ENCODE measurements at regions of chr1 and their contacts with region 1.

Region 1: GRCh38 chr1:212035123-212035834 is at the starts of genes DTL and INTS7:
- DNase-seq: peak; percentile 99
- ATAC-seq: peak; percentile 83
- H3K4me3 Mint-ChIP-seq: peak within 1 kb of the TSS; percentile 85
- H3K27ac Mint-ChIP-seq: peak within 1 kb of the TSS; percentile 100
- H3K4me1 Mint-ChIP-seq: peaks cover 56% of the 10 kb centered on the region
- H3K27me3 Mint-ChIP-seq: no peaks in the 10 kb centered on the region
- total RNA-seq, gene DTL: 82.1 to 114 TPM
- total RNA-seq, gene INTS7: 23.7 to 28.6 TPM

Region 2: GRCh38 chr1:211675230-211676105 is 359.8 kb before region 1 on chr1 and contains the start of gene NEK2:
- CTCF ChIA-PET with region 1: interaction called, 15 read pairs
- POLR2A ChIA-PET with region 1: interaction called, 10 read pairs
- intact Hi-C with region 1: loop called (anchors 1 kb)
- DNase-seq: peak; percentile 94
- ATAC-seq: peak; percentile 98
- H3K4me3 Mint-ChIP-seq: peak within 1 kb of the TSS; percentile 94
- H3K27ac Mint-ChIP-seq: peak within 1 kb of the TSS; percentile 84
- H3K4me1 Mint-ChIP-seq: peaks cover 6% of the 10 kb centered on the region
- H3K27me3 Mint-ChIP-seq: no peaks in the 10 kb centered on the region
- total RNA-seq, gene NEK2: 32.3 to 38.8 TPM

Region 3: GRCh38 chr1:211939876-211940468 is 95.3 kb before region 1 on chr1:
- CTCF ChIA-PET with region 1: interaction called, 3 read pairs
- POLR2A ChIA-PET with region 1: interaction called, 11 read pairs
- intact Hi-C with region 1: loop called (anchors 2 kb)
- DNase-seq: peak; percentile 78
- ATAC-seq: peak; percentile 55
- H3K4me3 Mint-ChIP-seq: no peak overlapping the region
- H3K27ac Mint-ChIP-seq: no peak overlapping the region
- H3K4me1 Mint-ChIP-seq: peaks cover 47% of the 10 kb centered on the region
- H3K27me3 Mint-ChIP-seq: no peaks in the 10 kb centered on the region

Region 4: DNA sequence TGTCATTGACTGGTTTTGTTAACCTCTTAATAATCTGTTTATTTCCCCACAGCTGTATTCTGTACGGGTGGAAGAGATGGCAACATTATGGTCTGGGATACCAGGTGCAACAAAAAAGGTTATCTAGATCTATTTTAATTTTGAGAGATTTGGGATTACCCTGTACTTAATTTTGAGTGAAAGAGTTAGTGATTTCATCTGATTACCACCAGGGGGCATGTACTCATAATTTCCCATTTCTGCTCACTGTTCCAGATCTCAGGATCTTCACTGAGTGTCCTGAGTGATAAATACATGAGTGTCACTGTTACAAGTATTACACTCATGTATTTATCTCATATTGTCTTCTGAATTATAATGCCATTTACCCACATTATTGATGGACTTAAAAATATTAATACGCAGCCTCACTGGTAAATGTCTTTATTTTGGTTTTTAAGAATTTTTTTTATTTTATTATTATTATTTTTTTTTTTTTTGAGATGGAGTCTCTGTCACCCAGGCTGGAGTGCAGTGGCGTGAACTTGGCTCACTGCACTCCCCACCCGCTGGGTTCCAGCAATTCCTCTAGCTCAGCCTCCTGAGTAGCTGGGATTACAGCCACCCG is 27.7 kb after region 1 on chr1:
- CTCF ChIA-PET with region 1: interaction called, 12 read pairs
- POLR2A ChIA-PET with region 1: no interaction called
- intact Hi-C with region 1: no loop called
- DNase-seq: no peak
- ATAC-seq: no peak
- H3K4me3 Mint-ChIP-seq: no peak overlapping the region
- H3K27ac Mint-ChIP-seq: no peak overlapping the region
- H3K4me1 Mint-ChIP-seq: no peaks in the 10 kb centered on the region
- H3K27me3 Mint-ChIP-seq: no peaks in the 10 kb centered on the region

Region 5: GRCh38 chr1:212132025-212132424 is 96.7 kb after region 1 on chr1:
- CTCF ChIA-PET with region 1: no interaction called
- POLR2A ChIA-PET with region 1: no interaction called
- intact Hi-C with region 1: no loop called
- DNase-seq: peak; percentile 34
- ATAC-seq: peak; percentile 70
- H3K4me3 Mint-ChIP-seq: no peak overlapping the region
- H3K27ac Mint-ChIP-seq: no peak overlapping the region
- H3K4me1 Mint-ChIP-seq: peaks cover 3% of the 10 kb centered on the region
- H3K27me3 Mint-ChIP-seq: no peaks in the 10 kb centered on the region

Region 6: GRCh38 chr1:212432706-212433576 is 397.7 kb after region 1 on chr1 and contains the start of gene NENF:
- CTCF ChIA-PET with region 1: no interaction called
- POLR2A ChIA-PET with region 1: no interaction called
- intact Hi-C with region 1: loop called (anchors 1 to 2 kb)
- DNase-seq: peak; percentile 88
- ATAC-seq: peak; percentile 99
- H3K4me3 Mint-ChIP-seq: peak within 1 kb of the TSS; percentile 75
- H3K27ac Mint-ChIP-seq: peak within 1 kb of the TSS; percentile 56
- H3K4me1 Mint-ChIP-seq: peaks cover 39% of the 10 kb centered on the region
- H3K27me3 Mint-ChIP-seq: no peaks in the 10 kb centered on the region
- total RNA-seq, gene NENF: 30.8 to 34.1 TPM

Region 7: GRCh38 chr1:212665241-212666115 is 630.2 kb after region 1 on chr1:
- CTCF ChIA-PET with region 1: no interaction called
- POLR2A ChIA-PET with region 1: no interaction called
- intact Hi-C with region 1: no loop called
- DNase-seq: peak; percentile 91
- ATAC-seq: peak; percentile 98
- H3K4me3 Mint-ChIP-seq: peak overlapping the region; percentile 57
- H3K27ac Mint-ChIP-seq: peak overlapping the region; percentile 77
- H3K4me1 Mint-ChIP-seq: peaks cover 15% of the 10 kb centered on the region
- H3K27me3 Mint-ChIP-seq: peaks cover 3% of the 10 kb centered on the region

Region 8: GRCh38 chr1:213015099-213016050 is 980.1 kb after region 1 on chr1 and contains the start of gene ANGEL2:
- CTCF ChIA-PET with region 1: no interaction called
- POLR2A ChIA-PET with region 1: no interaction called
- intact Hi-C with region 1: loop called in 1 of 2 experiments (anchors 1 kb)
- DNase-seq: peak; percentile 97
- ATAC-seq: peak; percentile 99
- H3K4me3 Mint-ChIP-seq: peak within 1 kb of the TSS; percentile 100
- H3K27ac Mint-ChIP-seq: peak within 1 kb of the TSS; percentile 100
- H3K4me1 Mint-ChIP-seq: peaks cover 30% of the 10 kb centered on the region
- H3K27me3 Mint-ChIP-seq: no peaks in the 10 kb centered on the region
- total RNA-seq, gene ANGEL2: 41.3 to 51.5 TPM

Measured in activated CD4-positive, alpha-beta T cell treated with anti-CD3 and anti-CD28 coated beads for 36 hours (primary cell).